ENCODE measurements at regions of chr17 and their contacts with region 1.

Region 1: DNA sequence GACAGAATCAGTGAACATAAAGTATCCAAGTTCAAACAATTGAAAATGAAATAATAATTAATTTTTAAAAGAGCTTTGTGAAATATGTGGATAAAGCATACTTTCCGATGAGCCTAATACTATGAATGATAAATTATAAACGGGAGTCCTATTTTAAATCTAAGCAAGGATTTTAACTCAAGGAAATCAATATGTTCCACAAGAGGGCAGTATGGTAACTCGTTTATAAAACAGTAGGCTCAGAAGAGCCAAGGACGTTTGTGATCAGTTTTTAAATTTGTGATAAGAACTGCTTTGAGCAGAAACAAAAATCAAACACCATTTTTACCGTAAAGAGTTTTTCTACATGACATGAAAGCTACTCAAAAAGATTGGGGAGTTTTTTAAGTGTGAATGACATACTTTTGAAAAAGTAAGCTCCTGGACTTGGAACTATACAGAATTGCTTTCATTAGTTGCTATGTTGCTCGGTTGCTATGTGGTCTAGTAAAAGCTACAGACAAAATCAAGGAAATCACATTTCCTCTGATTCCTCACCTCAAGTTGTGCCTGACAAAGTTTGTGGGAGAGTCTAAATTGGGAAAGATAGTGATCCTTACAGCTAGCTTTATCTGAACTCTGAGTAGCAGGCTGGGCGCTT is 11.8 kb upstream of the TEKT1 start:
- DNase-seq: peak in 1 of 2 experiments; percentile 74
- ATAC-seq: peak; percentile 73 to 80; a peak in 5 of 6 replicates
- H3K4me3 ChIP-seq: no peak overlapping the region
- H3K27ac ChIP-seq: peak overlapping the region in 1 of 2 experiments; percentile 44; a peak in 3 of 6 replicates
- H3K4me1 ChIP-seq: peaks cover 9% of the 10 kb centered on the region; the same call in 2 of the 3 replicates
- CTCF ChIP-seq: peak; percentile 92
- EP300 ChIP-seq: no peak
- POLR2A ChIP-seq: no peak
- RAD21 ChIP-seq: peak; percentile 84 to 91

Region 2: DNA sequence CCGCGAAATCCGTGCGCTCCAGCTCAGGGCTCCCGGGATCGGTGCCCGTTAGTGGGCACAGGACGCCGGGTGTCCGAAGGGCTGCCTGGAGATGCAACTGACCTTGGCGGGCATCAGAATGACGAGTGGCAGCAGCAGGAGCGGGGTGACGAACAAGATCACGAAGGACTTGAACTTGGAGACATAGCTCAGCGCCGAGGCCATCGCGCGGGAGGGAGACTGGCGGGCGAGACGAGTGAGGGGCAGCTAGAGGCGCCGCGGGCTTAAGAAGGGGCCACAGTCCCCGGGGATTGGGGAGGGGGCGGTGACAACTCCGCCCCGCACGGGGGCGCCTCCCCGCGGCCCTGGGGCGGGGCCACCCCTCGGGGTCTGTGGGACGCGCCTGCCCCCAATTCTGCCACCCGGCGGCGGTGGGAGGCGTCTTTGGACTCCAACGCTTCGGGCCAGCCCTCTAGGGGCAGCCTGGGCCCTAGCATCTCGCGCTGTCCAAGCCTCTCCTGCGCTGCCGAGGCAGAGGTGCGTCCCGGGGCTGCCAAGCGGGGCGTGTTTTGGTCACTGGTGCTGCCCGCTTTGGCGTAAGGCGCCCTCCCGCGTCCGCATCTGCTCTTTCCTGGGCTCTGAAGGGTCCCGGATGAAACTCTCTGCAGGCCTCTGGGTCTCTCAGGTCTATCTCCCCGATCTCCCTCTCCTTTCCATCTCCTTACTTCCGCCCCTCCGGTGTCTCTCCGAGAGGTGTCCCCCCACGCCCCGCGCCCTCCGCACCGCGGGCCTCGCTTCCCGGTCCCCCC is 130.0 kb before region 1 on chr17 and contains the start of gene SLC13A5:
- CTCF ChIA-PET with region 1: interaction called, 23 read pairs
- POLR2A ChIA-PET with region 1: no interaction called
- DNase-seq: peak; percentile 80 to 85
- ATAC-seq: peak; percentile 91 to 98
- H3K4me3 ChIP-seq: peak within 1 kb of the TSS; percentile 58
- H3K27ac ChIP-seq: peak within 1 kb of the TSS; percentile 54 to 74
- H3K4me1 ChIP-seq: 0 out of 3 replicates have a peak, but pooled peaks cover 3% of the 10 kb centered on the region
- CTCF ChIP-seq: peak; percentile 60
- EP300 ChIP-seq: no peak
- POLR2A ChIP-seq: no peak
- RAD21 ChIP-seq: peak in 1 of 2 experiments; percentile 37; a peak in 3 of 5 replicates
- polyA plus RNA-seq, gene SLC13A5: 0.26 and 0.30 TPM in 2 replicates

Region 3: GRCh38 chr17:6831661-6832263 is 11.6 kb before region 1 on chr17 and contains the start of gene TEKT1:
- CTCF ChIA-PET with region 1: interaction called, 45 read pairs
- POLR2A ChIA-PET with region 1: no interaction called
- DNase-seq: peak; percentile 81 to 86
- ATAC-seq: peak; percentile 93 to 95
- H3K4me3 ChIP-seq: peak within 1 kb of the TSS; percentile 47
- H3K27ac ChIP-seq: peak within 1 kb of the TSS in 1 of 2 experiments; percentile 50; a peak in 2 of 6 replicates
- H3K4me1 ChIP-seq: peaks cover 11% of the 10 kb centered on the region; the same call in 2 of the 3 replicates
- CTCF ChIP-seq: no peak
- EP300 ChIP-seq: no peak
- POLR2A ChIP-seq: no peak
- RAD21 ChIP-seq: no peak
- polyA plus RNA-seq, gene TEKT1: not detected in 2 replicates

Region 4: GRCh38 chr17:6872137-6872808 is 28.9 kb after region 1 on chr17:
- CTCF ChIA-PET with region 1: interaction called, 107 read pairs
- POLR2A ChIA-PET with region 1: no interaction called
- DNase-seq: peak; percentile 90 to 98
- ATAC-seq: peak; percentile 98 to 100
- H3K4me3 ChIP-seq: no peak overlapping the region
- H3K27ac ChIP-seq: peak overlapping the region; percentile 85
- H3K4me1 ChIP-seq: peaks cover 58% of the 10 kb centered on the region
- CTCF ChIP-seq: no peak
- EP300 ChIP-seq: peak; percentile 90; a peak in 3 of 5 replicates
- POLR2A ChIP-seq: no peak
- RAD21 ChIP-seq: peak; percentile 27 to 41; a peak in 2 of 5 replicates

Region 5: GRCh38 chr17:6913608-6914443 is 70.5 kb after region 1 on chr17:
- CTCF ChIA-PET with region 1: interaction called, 61 read pairs
- POLR2A ChIA-PET with region 1: interaction called, 3 read pairs
- DNase-seq: peak; percentile 57 to 74
- ATAC-seq: peak; percentile 70 to 82
- H3K4me3 ChIP-seq: peak overlapping the region; percentile 36; the same call in 2 of the 3 replicates
- H3K27ac ChIP-seq: peak overlapping the region; percentile 9 to 50; a peak in 3 of 6 replicates
- H3K4me1 ChIP-seq: peaks cover 5% of the 10 kb centered on the region; the same call in 2 of the 3 replicates
- CTCF ChIP-seq: peak; percentile 84
- EP300 ChIP-seq: no peak
- POLR2A ChIP-seq: no peak
- RAD21 ChIP-seq: peak; percentile 88 to 89

Region 6: DNA sequence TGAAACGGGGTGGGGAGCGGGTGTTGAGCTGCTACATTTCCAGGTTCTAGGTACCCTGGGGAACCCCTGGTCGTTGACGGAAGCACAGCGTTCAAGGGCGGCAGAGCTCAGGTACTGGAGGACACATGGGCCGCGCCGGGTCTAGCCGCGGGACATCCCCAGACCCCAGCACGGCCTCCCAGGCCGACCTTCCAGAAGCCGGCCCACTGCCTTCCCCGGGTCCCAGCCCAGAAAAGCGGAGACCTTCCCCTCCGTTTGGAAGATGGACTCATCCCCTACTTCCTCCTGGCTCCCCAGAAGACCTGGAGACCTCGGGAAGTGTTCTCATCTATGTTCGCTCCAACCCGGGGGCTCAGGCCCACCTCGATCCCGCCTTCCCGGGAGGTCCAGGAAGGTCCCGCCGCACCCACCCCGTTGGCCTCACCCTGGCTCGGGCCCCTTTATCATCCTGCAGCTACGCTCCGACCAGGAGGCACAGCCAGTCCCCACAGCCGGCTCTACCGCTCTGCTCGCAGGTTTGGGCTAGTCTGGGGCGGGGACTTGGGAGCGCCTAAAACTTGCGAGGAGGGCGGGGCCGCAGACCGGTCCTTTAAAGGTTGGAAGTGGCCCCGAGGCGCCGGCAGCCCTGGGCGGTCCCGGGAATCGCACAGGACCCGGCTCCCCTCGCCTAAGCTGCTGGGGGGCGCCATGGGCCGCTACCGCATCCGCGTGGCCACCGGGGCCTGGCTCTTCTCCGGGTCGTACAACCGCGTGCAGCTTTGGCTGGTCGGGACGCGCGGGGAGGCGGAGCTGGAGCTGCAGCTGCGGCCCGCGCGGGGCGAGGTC is 152.3 kb after region 1 on chr17 and contains the start of gene ALOX12:
- CTCF ChIA-PET with region 1: interaction called, 252 read pairs
- POLR2A ChIA-PET with region 1: no interaction called
- DNase-seq: no peak
- ATAC-seq: no peak
- H3K4me3 ChIP-seq: no peak within 1 kb of the TSS
- H3K27ac ChIP-seq: no peak within 1 kb of the TSS
- H3K4me1 ChIP-seq: no peaks in the 10 kb centered on the region
- CTCF ChIP-seq: no peak
- EP300 ChIP-seq: no peak
- POLR2A ChIP-seq: no peak
- RAD21 ChIP-seq: no peak
- polyA plus RNA-seq, gene ALOX12: not detected in 2 replicates